ENCODE measurements at regions of chr11 and their contacts with region 1.

Region 1: GRCh38 chr11:16239141-16240105 is 116.9 kb downstream of the SOX6 start:
- DNase-seq: no peak

Region 2: DNA sequence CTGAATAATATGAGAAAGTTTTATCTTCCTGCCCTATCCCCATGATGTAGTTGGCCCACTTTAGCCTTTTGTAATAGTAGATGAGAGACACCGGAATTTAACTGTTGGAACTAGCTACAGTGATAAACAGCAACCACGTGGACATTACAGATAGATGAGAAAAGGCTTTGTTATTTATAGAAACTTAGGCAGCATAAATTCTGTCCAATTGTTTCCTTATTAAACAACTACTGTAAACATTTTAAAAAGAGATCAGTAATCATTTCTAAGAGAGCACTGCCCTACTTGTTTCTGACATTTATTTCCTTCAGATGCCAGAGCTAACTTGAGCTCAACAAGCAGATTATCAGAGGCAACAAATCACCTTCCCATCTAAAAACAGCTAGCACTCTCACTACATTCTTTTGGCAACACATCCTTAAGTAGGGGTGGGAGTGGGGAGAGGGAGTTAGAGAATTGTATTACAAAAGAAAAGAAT is 53.8 kb after region 1 on chr11:
- intact Hi-C with region 1: loop called (anchors 10 kb)
- DNase-seq: no peak

Region 3: GRCh38 chr11:16421826-16422225 is 182.4 kb after region 1 on chr11:
- intact Hi-C with region 1: no loop called
- DNase-seq: no peak